Activated CD8-positive, alpha-beta T cell treated with anti-CD3 and anti-CD28 coated beads, Interleukin-2, amount 10 ng/mL, durations not matched to agents 7 days and 5 days (primary cell): ENCODE measurements at regions of chr12 and their contacts with region 1.

Region 1: DNA sequence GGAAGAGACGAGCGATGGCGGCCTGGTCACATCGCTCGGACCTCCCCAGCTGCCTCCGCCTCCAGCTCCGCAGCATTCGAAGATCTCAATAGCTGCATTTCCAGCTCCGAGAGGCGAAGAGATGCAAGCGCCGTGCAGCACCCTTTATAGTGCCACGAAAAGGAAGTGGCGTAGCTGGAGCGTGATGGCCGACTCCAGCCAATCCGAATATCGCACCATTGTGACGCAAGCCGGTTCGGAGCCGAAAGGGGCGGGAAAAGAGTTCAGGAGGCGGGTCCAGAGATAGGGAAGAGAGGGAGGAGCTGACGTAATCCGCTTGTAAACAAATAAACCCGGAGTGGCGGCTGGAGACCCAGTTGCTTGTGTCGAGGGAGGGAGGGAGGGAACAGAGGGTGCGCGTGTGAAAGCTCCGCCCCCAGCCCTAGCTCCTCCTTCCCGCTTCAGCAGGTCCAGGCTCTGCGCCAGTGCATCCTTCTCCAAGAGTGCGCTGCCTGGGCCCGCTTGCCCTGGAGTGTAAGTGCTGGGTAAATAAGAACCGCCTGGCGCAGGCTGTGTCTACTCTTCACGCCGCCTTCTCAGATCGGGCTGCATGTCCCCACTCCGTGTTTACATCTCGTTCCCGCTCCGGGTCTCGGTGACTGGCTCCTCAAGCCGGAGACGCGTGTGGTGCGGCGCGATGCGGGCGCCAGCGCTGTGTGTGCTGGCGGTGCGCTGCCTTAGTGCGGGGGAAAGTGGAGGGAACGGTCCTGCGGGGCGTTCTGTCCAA is at the start of gene BTG1:
- DNase-seq: peak; percentile 99
- ATAC-seq: peak; percentile 73
- H3K4me3 Mint-ChIP-seq: peak within 1 kb of the TSS; percentile 100
- H3K27ac Mint-ChIP-seq: peak within 1 kb of the TSS; percentile 99
- H3K4me1 Mint-ChIP-seq: peaks cover 20% of the 10 kb centered on the region
- H3K27me3 Mint-ChIP-seq: no peaks in the 10 kb centered on the region
- total RNA-seq, gene BTG1: 113 to 118 TPM

Region 2: DNA sequence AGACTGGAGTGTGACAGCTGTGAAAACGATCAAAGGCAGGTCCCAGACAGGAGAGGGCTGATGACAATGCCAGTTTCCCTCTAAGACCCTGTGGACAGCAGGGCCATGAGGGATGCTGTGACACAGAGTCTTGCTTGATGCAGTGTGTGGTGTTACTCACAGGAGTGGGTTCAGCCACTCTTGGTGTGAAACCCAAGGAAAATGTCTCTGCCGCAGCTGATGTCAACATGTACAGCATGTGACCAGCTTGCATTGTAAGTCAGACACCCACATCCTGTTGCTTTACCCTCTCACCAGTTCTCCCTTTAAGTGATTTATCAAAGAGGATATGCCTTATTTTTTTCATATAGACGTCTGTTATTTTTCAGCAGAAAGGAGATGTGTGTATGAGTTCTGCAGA is 268.9 kb before region 1 on chr12:
- CTCF ChIA-PET with region 1: no interaction called
- POLR2A ChIA-PET with region 1: interaction called, 42 read pairs
- DNase-seq: peak; percentile 91
- ATAC-seq: peak; percentile 98
- H3K4me3 Mint-ChIP-seq: peak overlapping the region; percentile 64
- H3K27ac Mint-ChIP-seq: peak overlapping the region; percentile 93
- H3K4me1 Mint-ChIP-seq: peaks cover 50% of the 10 kb centered on the region
- H3K27me3 Mint-ChIP-seq: no peaks in the 10 kb centered on the region

Region 3: DNA sequence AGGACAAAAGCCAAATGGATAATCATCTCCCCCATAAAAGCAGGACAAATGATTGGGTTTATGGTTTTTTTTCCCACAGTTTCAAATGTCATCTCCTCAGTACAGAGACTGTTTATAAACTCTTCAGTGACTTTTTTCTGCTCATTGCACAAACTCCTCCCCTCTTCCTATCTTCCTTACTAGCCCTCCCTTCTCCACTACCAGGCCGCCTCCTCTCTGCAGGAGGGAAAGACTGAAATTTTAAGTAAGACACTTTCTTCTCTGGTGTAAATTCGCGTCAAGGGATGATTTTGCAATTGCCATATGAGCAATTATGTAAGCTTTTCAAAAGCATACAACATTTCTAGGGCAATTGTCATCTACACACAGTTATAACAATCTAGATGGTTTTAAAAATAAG is 37.3 kb before region 1 on chr12:
- CTCF ChIA-PET with region 1: interaction called, 3 read pairs
- POLR2A ChIA-PET with region 1: interaction called, 28 read pairs
- DNase-seq: no peak
- ATAC-seq: no peak
- H3K4me3 Mint-ChIP-seq: no peak overlapping the region
- H3K27ac Mint-ChIP-seq: no peak overlapping the region
- H3K4me1 Mint-ChIP-seq: peaks cover 70% of the 10 kb centered on the region
- H3K27me3 Mint-ChIP-seq: no peaks in the 10 kb centered on the region

Region 4: DNA sequence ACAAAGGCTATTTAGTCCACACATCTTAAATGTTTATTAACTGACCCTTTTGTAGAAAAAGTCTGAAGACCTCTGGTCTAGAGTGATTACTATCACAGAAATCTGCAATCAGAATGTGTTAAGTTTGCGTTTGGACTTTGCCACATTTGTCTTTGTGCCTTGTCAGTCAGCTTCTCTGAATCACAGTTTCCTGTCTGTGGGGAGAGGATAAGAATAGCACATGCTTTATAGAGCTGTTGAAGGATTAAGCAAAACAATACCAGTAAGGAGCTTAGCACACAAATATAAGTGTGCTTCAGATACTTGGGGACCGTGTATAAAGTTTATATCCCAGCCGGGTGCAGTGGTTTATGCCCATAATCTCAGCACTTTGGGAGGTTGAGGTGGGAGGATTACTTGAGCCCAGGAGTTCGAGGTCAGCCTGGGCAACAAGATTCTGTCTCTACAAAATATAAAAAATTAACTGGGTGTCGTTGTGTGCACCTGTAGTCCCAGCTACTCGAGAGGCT is 62.8 kb after region 1 on chr12:
- CTCF ChIA-PET with region 1: interaction called, 42 read pairs
- POLR2A ChIA-PET with region 1: interaction called, 127 read pairs
- DNase-seq: peak; percentile 60
- ATAC-seq: peak; percentile 89
- H3K4me3 Mint-ChIP-seq: peak overlapping the region; percentile 51
- H3K27ac Mint-ChIP-seq: peak overlapping the region; percentile 93
- H3K4me1 Mint-ChIP-seq: peaks cover 41% of the 10 kb centered on the region
- H3K27me3 Mint-ChIP-seq: no peaks in the 10 kb centered on the region

Region 5: DNA sequence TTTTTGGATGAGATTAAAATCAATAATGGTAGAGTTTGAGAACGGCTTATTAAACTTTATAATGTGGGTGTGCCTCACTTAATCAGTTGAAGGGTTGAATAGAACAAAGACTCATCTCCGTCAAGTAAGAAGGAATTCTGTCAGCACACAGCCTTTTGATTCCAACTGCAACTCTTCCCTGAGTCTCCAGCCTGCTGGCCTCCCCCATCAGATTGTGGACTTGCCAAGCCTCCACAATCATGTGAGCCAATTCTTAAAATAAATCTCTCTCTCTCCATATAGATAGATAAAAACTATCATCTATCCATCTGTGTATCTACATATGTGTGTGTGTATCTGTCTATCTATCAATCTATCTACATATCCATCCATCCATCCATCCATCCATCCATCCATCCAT is 127.2 kb after region 1 on chr12:
- CTCF ChIA-PET with region 1: no interaction called
- POLR2A ChIA-PET with region 1: no interaction called
- DNase-seq: no peak
- ATAC-seq: no peak
- H3K4me3 Mint-ChIP-seq: no peak overlapping the region
- H3K27ac Mint-ChIP-seq: no peak overlapping the region
- H3K4me1 Mint-ChIP-seq: no peaks in the 10 kb centered on the region
- H3K27me3 Mint-ChIP-seq: no peaks in the 10 kb centered on the region

Region 6: DNA sequence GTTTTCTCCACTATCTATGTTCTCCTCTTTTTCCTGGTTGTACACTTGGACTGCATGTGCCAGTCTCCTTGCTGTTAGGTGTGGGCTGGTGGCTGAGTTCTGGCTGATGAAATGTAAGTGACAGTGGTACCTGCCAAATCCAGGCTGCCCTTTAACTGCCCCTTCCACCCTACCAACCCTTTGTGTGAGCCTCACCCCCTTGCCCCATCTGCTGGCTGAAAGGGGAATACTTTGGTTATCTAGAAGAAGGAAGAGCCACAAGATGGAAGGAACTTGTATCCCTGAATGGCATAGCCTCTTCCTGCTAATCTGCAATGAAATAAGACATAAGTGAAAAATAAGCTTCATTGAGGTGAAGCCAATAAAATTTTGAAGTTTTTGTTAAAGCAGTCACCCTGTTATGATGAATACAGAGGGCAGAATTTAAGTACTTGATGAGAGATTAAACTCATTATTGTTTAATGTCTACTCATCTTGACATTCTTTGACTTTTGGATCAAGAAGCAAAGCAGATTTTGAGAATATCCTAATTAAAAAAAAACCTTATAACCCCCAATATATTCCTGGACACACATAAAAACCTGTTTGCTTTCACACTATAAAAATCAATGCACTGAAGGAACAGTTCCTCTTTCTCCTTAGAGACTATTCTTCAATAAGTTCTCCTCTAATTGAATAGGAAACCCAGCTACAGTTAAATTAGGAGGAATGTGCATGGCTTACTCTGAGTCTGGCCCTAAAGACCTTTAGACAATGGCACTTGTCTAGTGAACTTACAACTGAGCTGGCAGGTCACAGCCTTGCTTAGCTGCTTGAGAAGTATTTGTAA is 262.4 kb after region 1 on chr12:
- CTCF ChIA-PET with region 1: interaction called, 15 read pairs
- POLR2A ChIA-PET with region 1: interaction called, 218 read pairs
- DNase-seq: peak; percentile 74
- ATAC-seq: peak; percentile 24
- H3K4me3 Mint-ChIP-seq: no peak overlapping the region
- H3K27ac Mint-ChIP-seq: no peak overlapping the region
- H3K4me1 Mint-ChIP-seq: peaks cover 46% of the 10 kb centered on the region
- H3K27me3 Mint-ChIP-seq: no peaks in the 10 kb centered on the region

Region 7: GRCh38 chr12:92419201-92419600 is 273.3 kb after region 1 on chr12:
- CTCF ChIA-PET with region 1: no interaction called
- POLR2A ChIA-PET with region 1: no interaction called
- DNase-seq: no peak
- ATAC-seq: no peak
- H3K4me3 Mint-ChIP-seq: no peak overlapping the region
- H3K27ac Mint-ChIP-seq: no peak overlapping the region
- H3K4me1 Mint-ChIP-seq: no peaks in the 10 kb centered on the region
- H3K27me3 Mint-ChIP-seq: no peaks in the 10 kb centered on the region

Region 8: GRCh38 chr12:92570056-92570753 is 424.3 kb after region 1 on chr12:
- CTCF ChIA-PET with region 1: interaction called, 10 read pairs
- POLR2A ChIA-PET with region 1: interaction called, 27 read pairs
- DNase-seq: peak; percentile 71
- ATAC-seq: peak; percentile 85
- H3K4me3 Mint-ChIP-seq: no peak overlapping the region
- H3K27ac Mint-ChIP-seq: no peak overlapping the region
- H3K4me1 Mint-ChIP-seq: peaks cover 12% of the 10 kb centered on the region
- H3K27me3 Mint-ChIP-seq: no peaks in the 10 kb centered on the region